CD8-positive, alpha-beta T cell (primary cell): ENCODE measurements at regions of chr16 and their contacts with region 1.

Region 1: DNA sequence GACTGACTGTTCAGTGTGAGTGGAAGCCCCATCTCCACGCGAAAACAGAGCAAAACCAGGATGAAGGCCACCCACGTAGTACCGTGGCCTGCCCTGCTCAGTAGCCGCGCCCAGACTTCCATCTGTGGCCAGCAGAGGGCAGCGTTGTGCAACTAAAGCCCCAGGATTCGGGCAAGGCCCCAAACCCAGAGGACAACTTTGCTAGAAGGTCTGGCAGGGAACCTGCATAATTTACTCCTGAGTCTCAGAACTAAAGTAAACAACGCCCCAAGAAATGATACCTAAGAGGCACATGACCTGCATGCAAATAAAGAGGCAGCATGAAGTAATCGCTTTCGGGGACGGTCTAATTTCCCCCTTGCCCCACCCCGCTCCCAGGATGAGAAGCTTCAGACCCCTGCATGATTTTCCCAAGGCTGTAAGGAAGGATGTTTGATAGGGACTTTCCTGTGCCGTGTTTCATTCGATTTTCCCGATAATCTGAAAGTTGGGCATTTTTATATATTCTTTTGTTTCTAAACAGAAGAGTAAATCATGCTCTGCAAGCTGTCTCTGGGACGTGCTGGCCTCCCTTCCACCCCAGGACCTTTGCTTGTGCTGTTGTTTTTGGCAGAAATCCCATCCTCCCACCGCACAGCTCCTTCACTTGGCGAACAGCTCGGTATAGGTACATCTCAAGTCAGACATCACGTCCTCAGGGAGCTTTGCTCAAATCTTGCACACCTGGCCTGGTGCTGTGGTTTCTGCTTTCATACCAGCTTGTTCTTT is 18.6 kb downstream of the HSBP1 start:
- DNase-seq: peak; percentile 60 to 88 (median 75)
- ATAC-seq: peak; percentile 97
- H3K4me3 ChIP-seq: no peak overlapping the region
- H3K4me3 Mint-ChIP-seq: no peak overlapping the region
- H3K27ac ChIP-seq: no peak overlapping the region
- H3K27ac Mint-ChIP-seq: no peak overlapping the region
- H3K4me1 ChIP-seq: no peaks in the 10 kb centered on the region
- H3K4me1 Mint-ChIP-seq: peaks cover 4% of the 10 kb centered on the region
- H3K27me3 ChIP-seq: peaks cover 0 to 3% of the 10 kb centered on the region in 2 experiments
- H3K27me3 Mint-ChIP-seq: peaks cover 6% of the 10 kb centered on the region
- CTCF ChIP-seq: peak; percentile 87

Region 2: DNA sequence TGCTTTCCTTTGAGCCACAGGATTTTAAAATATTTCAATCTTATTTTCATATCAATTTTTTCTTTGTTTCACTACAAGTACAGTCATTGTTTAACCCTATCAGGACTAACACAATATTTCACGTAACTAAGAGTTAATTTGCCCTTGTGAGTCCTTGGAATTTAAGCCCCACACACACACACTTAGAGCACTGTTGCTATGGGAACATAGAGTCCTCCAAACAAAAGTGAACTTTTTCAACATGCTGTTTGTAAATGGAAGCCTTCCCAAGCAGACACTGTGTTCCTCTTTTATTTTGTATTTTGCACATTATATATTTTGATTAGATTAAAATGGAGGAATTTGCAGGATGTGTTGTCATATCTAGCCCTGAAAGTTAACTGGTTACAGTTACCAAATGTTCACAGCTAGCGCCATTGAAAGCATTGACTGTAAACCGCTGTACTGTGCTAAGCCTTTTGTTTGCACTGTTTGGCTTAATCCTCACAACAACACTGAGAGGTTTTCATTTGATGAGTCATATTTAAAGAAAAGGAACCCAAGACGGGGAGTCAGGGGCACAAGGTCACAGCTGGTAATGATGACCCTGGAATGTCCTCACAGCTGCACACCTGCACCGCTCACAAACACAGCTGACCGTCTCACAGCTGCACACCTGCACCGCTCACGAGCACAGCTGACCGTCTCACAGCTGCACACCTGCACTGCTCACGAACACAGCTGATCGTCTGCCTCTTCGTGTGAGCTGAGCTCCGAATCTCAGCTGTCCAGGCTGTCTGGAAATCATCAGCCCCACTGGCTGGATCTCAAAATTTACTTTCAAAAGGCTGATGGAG is 12.3 kb before region 1 on chr16:
- CTCF ChIA-PET with region 1: interaction called, 27 read pairs
- POLR2A ChIA-PET with region 1: no interaction called
- intact Hi-C with region 1: no loop called
- DNase-seq: no peak
- ATAC-seq: no peak
- H3K4me3 ChIP-seq: no peak overlapping the region
- H3K4me3 Mint-ChIP-seq: no peak overlapping the region
- H3K27ac ChIP-seq: no peak overlapping the region
- H3K27ac Mint-ChIP-seq: no peak overlapping the region
- H3K4me1 ChIP-seq: peaks cover 2% of the 10 kb centered on the region
- H3K4me1 Mint-ChIP-seq: peaks cover 16% of the 10 kb centered on the region
- H3K27me3 ChIP-seq: no peaks in the 10 kb centered on the region
- H3K27me3 Mint-ChIP-seq: no peaks in the 10 kb centered on the region
- CTCF ChIP-seq: no peak

Region 3: DNA sequence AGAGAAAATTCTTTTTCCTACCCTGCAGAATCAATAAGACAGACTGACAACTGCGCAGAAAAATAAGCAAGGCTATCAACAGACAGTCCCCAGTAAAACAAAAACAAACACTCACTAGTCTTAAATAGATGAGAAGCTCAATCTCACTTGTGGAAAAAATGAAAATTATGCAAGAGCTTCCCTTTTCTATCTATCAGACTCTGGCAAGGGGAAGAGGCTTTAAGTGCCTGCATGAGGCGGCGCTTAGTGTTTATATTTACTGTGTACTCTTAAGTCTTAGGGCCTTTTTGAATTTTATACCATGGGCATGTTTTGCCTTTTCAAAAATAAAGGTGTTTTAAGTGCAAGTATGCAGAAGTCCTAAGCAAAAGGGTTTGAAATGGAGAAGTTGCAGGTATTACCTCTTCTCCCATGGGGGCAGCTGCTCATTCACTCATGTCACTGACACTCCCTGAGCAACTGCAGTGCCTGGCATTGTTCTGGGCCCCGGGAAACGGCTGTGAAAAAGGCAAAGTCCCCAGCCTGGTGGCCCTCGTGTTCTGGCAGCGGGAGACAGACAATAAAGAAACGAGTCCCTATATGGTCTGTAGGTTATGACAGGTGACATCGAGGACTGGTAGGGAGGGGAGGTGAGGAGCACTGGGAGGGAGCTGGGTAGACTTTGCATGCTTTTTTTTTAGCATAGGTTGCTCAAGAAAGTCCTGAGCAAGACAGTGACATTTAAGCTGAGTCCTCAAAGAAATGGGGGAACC is 16.6 kb after region 1 on chr16:
- CTCF ChIA-PET with region 1: interaction called, 10 read pairs
- POLR2A ChIA-PET with region 1: interaction called, 6 read pairs
- intact Hi-C with region 1: no loop called
- DNase-seq: no peak
- ATAC-seq: no peak
- H3K4me3 ChIP-seq: no peak overlapping the region
- H3K4me3 Mint-ChIP-seq: no peak overlapping the region
- H3K27ac ChIP-seq: no peak overlapping the region
- H3K27ac Mint-ChIP-seq: no peak overlapping the region
- H3K4me1 ChIP-seq: no peaks in the 10 kb centered on the region
- H3K4me1 Mint-ChIP-seq: no peaks in the 10 kb centered on the region
- H3K27me3 ChIP-seq: no peaks in the 10 kb centered on the region
- H3K27me3 Mint-ChIP-seq: peaks cover 9% of the 10 kb centered on the region
- CTCF ChIP-seq: no peak

Region 4: DNA sequence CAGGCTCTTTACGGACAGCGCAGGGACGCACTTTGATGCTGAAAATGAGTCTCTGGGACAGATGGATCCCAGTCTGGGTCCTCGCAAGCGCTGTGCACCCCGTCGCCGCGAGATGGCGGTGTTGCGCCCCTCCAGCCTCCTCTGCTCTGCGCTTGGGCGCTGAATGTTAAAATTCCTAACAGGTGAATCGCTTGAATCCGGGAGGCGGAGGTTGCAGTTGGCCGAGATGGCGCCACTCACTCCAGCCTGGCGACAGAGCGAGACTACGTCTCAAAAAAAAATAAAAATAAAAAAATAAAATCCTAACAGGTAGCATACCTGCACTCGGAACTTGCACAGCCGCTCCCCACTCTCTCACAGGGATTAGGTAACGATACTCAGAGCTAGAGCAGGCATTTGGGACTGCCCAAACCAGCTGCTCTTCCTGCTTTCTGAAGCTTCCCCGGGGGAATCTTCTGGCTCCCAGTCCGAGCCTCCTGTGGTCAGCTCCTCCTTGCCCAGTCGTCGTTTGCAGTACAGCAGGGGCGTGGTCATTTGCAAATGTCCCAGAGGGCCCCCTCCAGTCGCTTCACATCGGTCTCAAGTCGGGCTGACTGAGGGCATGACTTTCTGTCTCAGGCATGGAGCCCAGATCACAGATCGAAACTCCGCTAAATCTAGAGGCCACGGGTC is 100.5 kb after region 1 on chr16:
- CTCF ChIA-PET with region 1: interaction called, 4 read pairs
- POLR2A ChIA-PET with region 1: no interaction called
- intact Hi-C with region 1: loop called in 1 of 2 experiments (anchors 5 kb)
- DNase-seq: peak; percentile 28 to 70 (median 56)
- ATAC-seq: peak; percentile 72
- H3K4me3 ChIP-seq: no peak overlapping the region
- H3K4me3 Mint-ChIP-seq: no peak overlapping the region
- H3K27ac ChIP-seq: no peak overlapping the region
- H3K27ac Mint-ChIP-seq: no peak overlapping the region
- H3K4me1 ChIP-seq: no peaks in the 10 kb centered on the region
- H3K4me1 Mint-ChIP-seq: peaks cover 4% of the 10 kb centered on the region
- H3K27me3 ChIP-seq: no peaks in the 10 kb centered on the region
- H3K27me3 Mint-ChIP-seq: no peaks in the 10 kb centered on the region
- CTCF ChIP-seq: peak; percentile 87

Region 5: GRCh38 chr16:84062734-84063640 is 236.7 kb after region 1 on chr16:
- CTCF ChIA-PET with region 1: interaction called, 12 read pairs
- POLR2A ChIA-PET with region 1: no interaction called
- intact Hi-C with region 1: loop called in 1 of 2 experiments (anchors 1 kb)
- DNase-seq: peak; percentile 23 to 68 (median 59)
- ATAC-seq: peak; percentile 89
- H3K4me3 ChIP-seq: no peak overlapping the region
- H3K4me3 Mint-ChIP-seq: no peak overlapping the region
- H3K27ac ChIP-seq: no peak overlapping the region
- H3K27ac Mint-ChIP-seq: peak overlapping the region; percentile 67
- H3K4me1 ChIP-seq: no peaks in the 10 kb centered on the region
- H3K4me1 Mint-ChIP-seq: no peaks in the 10 kb centered on the region
- H3K27me3 ChIP-seq: no peaks in the 10 kb centered on the region
- H3K27me3 Mint-ChIP-seq: no peaks in the 10 kb centered on the region
- CTCF ChIP-seq: peak; percentile 80

Region 6: GRCh38 chr16:84396537-84397008 is 570.2 kb after region 1 on chr16:
- CTCF ChIA-PET with region 1: no interaction called
- POLR2A ChIA-PET with region 1: no interaction called
- intact Hi-C with region 1: no loop called
- DNase-seq: no peak
- ATAC-seq: no peak
- H3K4me3 ChIP-seq: no peak overlapping the region
- H3K4me3 Mint-ChIP-seq: no peak overlapping the region
- H3K27ac ChIP-seq: no peak overlapping the region
- H3K27ac Mint-ChIP-seq: no peak overlapping the region
- H3K4me1 ChIP-seq: no peaks in the 10 kb centered on the region
- H3K4me1 Mint-ChIP-seq: no peaks in the 10 kb centered on the region
- H3K27me3 ChIP-seq: peaks cover 2 to 3% of the 10 kb centered on the region in 2 experiments
- H3K27me3 Mint-ChIP-seq: peaks cover 31% of the 10 kb centered on the region
- CTCF ChIP-seq: no peak